ENCODE measurements at regions of chr1 and their contacts with region 1.

Region 1: GRCh38 chr1:206544562-206545257 is 37.4 kb downstream of the RASSF5 start:
- DNase-seq: peak; percentile 66 to 83 (median 76)
- H3K4me3 ChIP-seq: no peak overlapping the region
- H3K4me3 Mint-ChIP-seq: peak overlapping the region in 2 of 8 donors; percentile 6 to 52
- H3K27ac ChIP-seq: no peak overlapping the region
- H3K27ac Mint-ChIP-seq: peak overlapping the region in 5 of 7 donors; percentile 27 to 77 (median 60)
- H3K4me1 ChIP-seq: peaks cover 10% of the 10 kb centered on the region
- H3K4me1 Mint-ChIP-seq: peaks cover 5 to 15% (median 11%) of the 10 kb centered on the region in 4 donors
- H3K27me3 ChIP-seq: no peaks in the 10 kb centered on the region
- H3K27me3 Mint-ChIP-seq: no peaks in the 10 kb centered on the region

Region 2: GRCh38 chr1:206461602-206462455 is 82.9 kb before region 1 on chr1:
- CTCF ChIA-PET with region 1: interaction called, 20 read pairs
- POLR2A ChIA-PET with region 1: no interaction called
- intact Hi-C with region 1: no loop called
- DNase-seq: peak; percentile 62 to 72 (median 65)
- H3K4me3 ChIP-seq: no peak overlapping the region
- H3K4me3 Mint-ChIP-seq: no peak overlapping the region
- H3K27ac ChIP-seq: no peak overlapping the region
- H3K27ac Mint-ChIP-seq: peak overlapping the region in 4 of 7 donors; percentile 13 to 77 (median 16)
- H3K4me1 ChIP-seq: peaks cover 36% of the 10 kb centered on the region
- H3K4me1 Mint-ChIP-seq: peaks cover 21 to 49% (median 36%) of the 10 kb centered on the region in 4 donors
- H3K27me3 ChIP-seq: no peaks in the 10 kb centered on the region
- H3K27me3 Mint-ChIP-seq: no peaks in the 10 kb centered on the region

Region 3: GRCh38 chr1:206479183-206480125 is 65.3 kb before region 1 on chr1:
- CTCF ChIA-PET with region 1: interaction called, 15 read pairs
- POLR2A ChIA-PET with region 1: no interaction called
- intact Hi-C with region 1: no loop called
- DNase-seq: peak; percentile 46 to 67 (median 52)
- H3K4me3 ChIP-seq: no peak overlapping the region
- H3K4me3 Mint-ChIP-seq: no peak overlapping the region
- H3K27ac ChIP-seq: no peak overlapping the region
- H3K27ac Mint-ChIP-seq: peak overlapping the region in 5 of 7 donors; percentile 8 to 80 (median 78)
- H3K4me1 ChIP-seq: peaks cover 21% of the 10 kb centered on the region
- H3K4me1 Mint-ChIP-seq: peaks cover 5 to 18% (median 12%) of the 10 kb centered on the region in 4 donors
- H3K27me3 ChIP-seq: no peaks in the 10 kb centered on the region
- H3K27me3 Mint-ChIP-seq: no peaks in the 10 kb centered on the region

Region 4: GRCh38 chr1:206507284-206508129 is 37.2 kb before region 1 on chr1 and contains the start of gene RASSF5:
- CTCF ChIA-PET with region 1: interaction called, 12 read pairs
- POLR2A ChIA-PET with region 1: interaction called, 4 read pairs
- intact Hi-C with region 1: no loop called
- DNase-seq: peak; percentile 76 to 81 (median 78)
- H3K4me3 ChIP-seq: peak within 1 kb of the TSS; percentile 39 to 58
- H3K4me3 Mint-ChIP-seq: peak within 1 kb of the TSS; percentile 80 to 89 (median 82)
- H3K27ac ChIP-seq: no peak within 1 kb of the TSS
- H3K27ac Mint-ChIP-seq: peak within 1 kb of the TSS in 4 of 7 donors; percentile 54 to 67 (median 64)
- H3K4me1 ChIP-seq: peaks cover 45% of the 10 kb centered on the region
- H3K4me1 Mint-ChIP-seq: peaks cover 17 to 55% (median 34%) of the 10 kb centered on the region in 4 donors
- H3K27me3 ChIP-seq: peaks cover 4% of the 10 kb centered on the region
- H3K27me3 Mint-ChIP-seq: peaks cover 6 to 8% of the 10 kb centered on the region in 2 donors
- total RNA-seq, gene RASSF5: 186 to 190 TPM

Region 5: GRCh38 chr1:206563367-206564207 is 18.9 kb after region 1 on chr1:
- CTCF ChIA-PET with region 1: interaction called, 207 read pairs
- POLR2A ChIA-PET with region 1: interaction called, 19 read pairs
- intact Hi-C with region 1: no loop called
- DNase-seq: no peak
- H3K4me3 ChIP-seq: peak overlapping the region; percentile 24 to 46
- H3K4me3 Mint-ChIP-seq: peak overlapping the region; percentile 73 to 92 (median 84)
- H3K27ac ChIP-seq: peak overlapping the region; percentile 53
- H3K27ac Mint-ChIP-seq: peak overlapping the region; percentile 88 to 94 (median 94)
- H3K4me1 ChIP-seq: peaks cover 95% of the 10 kb centered on the region
- H3K4me1 Mint-ChIP-seq: peaks cover 73 to 99% (median 86%) of the 10 kb centered on the region in 4 donors
- H3K27me3 ChIP-seq: no peaks in the 10 kb centered on the region
- H3K27me3 Mint-ChIP-seq: no peaks in the 10 kb centered on the region

Region 6: GRCh38 chr1:206590025-206590758 is 45.5 kb after region 1 on chr1:
- CTCF ChIA-PET with region 1: interaction called, 550 read pairs
- POLR2A ChIA-PET with region 1: interaction called, 786 read pairs
- intact Hi-C with region 1: no loop called
- DNase-seq: peak; percentile 52 to 87 (median 62)
- H3K4me3 ChIP-seq: no peak overlapping the region
- H3K4me3 Mint-ChIP-seq: peak overlapping the region in 6 of 8 donors; percentile 0 to 66 (median 30)
- H3K27ac ChIP-seq: peak overlapping the region; percentile 44
- H3K27ac Mint-ChIP-seq: peak overlapping the region; percentile 73 to 94 (median 87)
- H3K4me1 ChIP-seq: peaks cover 35% of the 10 kb centered on the region
- H3K4me1 Mint-ChIP-seq: peaks cover 28 to 57% (median 33%) of the 10 kb centered on the region in 4 donors
- H3K27me3 ChIP-seq: no peaks in the 10 kb centered on the region
- H3K27me3 Mint-ChIP-seq: no peaks in the 10 kb centered on the region